ENCODE measurements at regions of chr6 and their contacts with region 1.

Region 1: GRCh38 chr6:145734486-145735355 is 599 bp downstream of the EPM2A start:
- DNase-seq: peak; percentile 90
- H3K27ac ChIP-seq: peak overlapping the region; percentile 97
- CTCF ChIP-seq: no peak

Region 2: DNA sequence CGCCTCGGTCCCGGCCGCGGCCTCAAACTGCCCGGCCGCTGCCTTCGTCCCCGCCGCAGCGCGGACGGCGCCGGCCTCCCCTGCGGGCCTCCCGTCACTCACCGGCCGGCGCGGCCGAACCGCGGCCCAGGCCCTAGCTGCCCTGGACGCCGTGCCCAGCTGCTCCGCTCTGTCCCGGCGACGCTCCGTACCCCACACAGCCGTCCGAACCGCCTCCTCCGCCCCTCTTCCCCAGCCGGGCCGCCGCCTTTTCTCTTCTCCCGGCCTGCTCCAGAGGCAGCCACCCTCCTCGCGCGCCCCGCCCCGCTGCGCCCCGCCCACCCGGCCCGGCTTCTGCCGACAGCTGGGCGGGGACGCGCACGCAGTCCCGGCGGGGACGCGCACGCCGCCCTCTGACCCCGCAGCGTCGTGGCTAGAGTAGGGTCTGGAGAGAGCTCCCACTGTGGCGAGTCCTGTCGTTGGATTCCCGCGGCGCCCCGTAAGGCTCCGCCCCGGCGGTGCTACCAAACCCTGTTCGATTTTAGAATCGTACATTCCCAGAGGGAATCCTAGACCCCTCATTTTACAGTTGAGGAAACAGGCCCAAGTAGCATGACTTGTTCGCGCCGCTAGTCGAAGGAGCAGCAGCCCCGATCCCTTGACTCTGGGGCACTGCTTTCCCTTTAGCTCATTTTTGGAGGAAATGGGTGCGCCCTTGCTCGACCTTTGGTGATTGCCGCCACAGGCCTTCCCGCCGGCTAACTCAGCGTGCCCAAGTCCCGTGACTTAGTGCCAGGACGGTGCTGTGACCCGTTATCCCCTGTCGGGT is 80.0 kb after region 1 on chr6 and contains the start of gene FBXO30:
- CTCF ChIA-PET with region 1: no interaction called
- POLR2A ChIA-PET with region 1: interaction called, 17 read pairs
- DNase-seq: peak; percentile 87
- H3K27ac ChIP-seq: peak within 1 kb of the TSS; percentile 92
- CTCF ChIP-seq: no peak

Measured in RWPE1 (cell line).